Thyroid gland (tissue), 4 donors: ENCODE measurements at regions of chr19 and their contacts with region 1.

Region 1: GRCh38 chr19:14119637-14120496 is 2.3 kb upstream of the PRKACA start:
- DNase-seq: no peak
- H3K4me3 ChIP-seq: no peak overlapping the region
- H3K27ac ChIP-seq: peak overlapping the region; percentile 89 to 99 (median 99)
- H3K4me1 ChIP-seq: peaks cover 30 to 33% of the 10 kb centered on the region in 2 donors
- H3K27me3 ChIP-seq: no peaks in the 10 kb centered on the region
- CTCF ChIP-seq: no peak
- POLR2A ChIP-seq: no peak

Region 2: DNA sequence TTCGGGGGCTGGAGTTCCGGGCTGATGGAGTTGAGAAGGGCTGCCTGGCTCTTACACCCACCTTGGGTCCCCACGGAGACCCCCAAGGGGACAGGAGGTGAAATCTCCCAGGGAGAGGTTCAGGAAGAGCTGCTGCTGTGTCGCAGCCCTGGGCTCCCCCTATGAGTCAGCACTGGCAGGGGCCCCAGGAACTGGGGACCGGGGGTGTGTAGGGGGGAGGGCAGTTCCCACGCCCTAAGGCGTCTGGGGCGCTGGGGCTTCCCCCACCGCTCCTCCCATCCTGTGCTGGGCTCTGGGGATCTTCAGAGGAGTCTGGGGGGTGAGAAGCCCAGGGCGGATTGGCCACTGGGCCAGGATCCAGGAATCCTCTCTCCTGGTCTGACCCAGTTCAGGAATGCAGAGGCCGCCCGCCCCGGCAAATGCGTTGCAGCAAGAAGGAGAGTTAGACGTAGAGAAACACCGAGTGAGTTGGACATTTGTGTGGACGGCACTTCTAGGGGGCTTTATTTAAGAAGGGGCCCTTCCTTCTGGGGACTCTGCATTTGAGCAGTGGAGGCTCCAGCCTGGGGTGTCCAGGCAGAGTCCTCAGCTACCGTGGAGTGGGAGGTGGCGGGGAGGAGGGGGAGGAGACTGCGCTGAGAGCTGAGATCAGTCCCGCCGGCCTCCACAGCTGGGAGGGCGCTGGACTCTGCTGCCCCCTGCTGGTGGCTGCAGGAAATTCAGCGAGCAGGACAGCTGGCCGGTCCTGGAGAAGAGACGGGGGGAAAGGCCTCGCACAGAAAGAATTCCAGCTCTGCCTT is 257.9 kb before region 1 on chr19:
- intact Hi-C with region 1: no loop called
- DNase-seq: peak; percentile 94 to 95
- H3K4me3 ChIP-seq: peak overlapping the region in 1 of 3 donors; percentile 20
- H3K27ac ChIP-seq: peak overlapping the region; percentile 75 to 92 (median 89)
- H3K4me1 ChIP-seq: peaks cover 5 to 22% of the 10 kb centered on the region in 2 donors
- H3K27me3 ChIP-seq: no peaks in the 10 kb centered on the region
- CTCF ChIP-seq: peak; percentile 94 to 99 (median 98)
- POLR2A ChIP-seq: peak in 1 of 2 donors; percentile 77

Region 3: DNA sequence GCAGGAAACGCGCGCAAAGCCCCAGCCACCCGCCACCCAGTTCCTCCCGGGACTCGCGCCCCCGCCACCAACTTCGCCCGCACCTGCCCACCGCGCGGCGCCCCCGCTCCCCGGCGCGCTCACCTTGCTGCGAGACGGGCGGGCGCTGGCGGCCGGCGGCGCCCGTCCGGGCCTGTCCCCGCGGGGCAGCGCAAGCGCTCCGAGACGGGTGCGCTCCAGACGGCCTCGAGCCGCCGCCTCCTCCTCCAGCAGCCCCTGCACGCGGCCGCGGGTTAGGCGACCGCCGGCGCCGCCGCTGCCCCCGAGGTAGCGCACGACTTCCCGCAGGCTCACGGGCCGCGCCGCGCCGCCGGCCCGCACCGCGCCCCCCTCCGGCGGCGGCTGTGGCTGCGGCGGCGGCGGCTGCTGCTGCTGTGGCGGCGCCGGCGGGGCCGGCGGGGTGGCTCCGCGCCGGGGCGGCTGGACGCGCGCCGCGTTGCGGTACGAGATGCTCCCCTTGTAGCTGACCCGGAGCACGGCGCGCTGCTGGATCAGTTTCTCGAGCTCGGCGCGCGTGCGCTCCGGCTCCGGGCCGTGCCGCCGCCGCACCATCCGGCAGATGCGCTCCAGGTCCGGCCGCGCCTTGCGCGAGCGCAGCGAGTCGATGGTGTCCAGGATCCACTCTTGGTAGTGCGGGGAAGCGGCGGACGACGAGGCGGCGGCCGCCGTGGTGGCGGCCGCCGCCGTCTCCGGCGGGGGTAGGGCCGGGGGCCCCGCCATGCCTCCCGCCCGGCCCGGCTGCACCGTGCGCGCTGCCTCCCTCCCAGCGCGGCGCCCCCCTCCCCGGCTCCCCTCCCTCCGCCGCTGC is 30.0 kb before region 1 on chr19:
- intact Hi-C with region 1: loop called (anchors 5 kb)
- DNase-seq: peak; percentile 43 to 45
- H3K4me3 ChIP-seq: peak overlapping the region in 1 of 3 donors; percentile 93
- H3K27ac ChIP-seq: peak overlapping the region in 1 of 3 donors; percentile 71
- H3K4me1 ChIP-seq: peaks cover 0 to 28% of the 10 kb centered on the region in 2 donors
- H3K27me3 ChIP-seq: no peaks in the 10 kb centered on the region
- CTCF ChIP-seq: peak in 2 of 6 experiments; percentile 26 to 27
- POLR2A ChIP-seq: no peak